Activated T-helper 1 cell treated with anti-CD3 and anti-CD28 coated beads, Interleukin-12 subunit alpha, Interleukin-12 subunit beta, Interleukin-2, Interleukin-4 antibody, amounts not matched to agents 30 ng/mL and 10 ng/mL and 1 ng/mL, durations not matched to agents 14 hours and 24 hours and 36 hours (primary cell): ENCODE measurements at regions of chr9 and their contacts with region 1.

Region 1: GRCh38 chr9:97632985-97633858 is at the starts of genes NCBP1 and TSTD2:
- DNase-seq: peak; percentile 95
- H3K4me3 Mint-ChIP-seq: peak within 1 kb of the TSS; percentile 94
- H3K27ac Mint-ChIP-seq: peak within 1 kb of the TSS; percentile 99
- H3K4me1 Mint-ChIP-seq: peaks cover 48% of the 10 kb centered on the region
- H3K27me3 Mint-ChIP-seq: no peaks in the 10 kb centered on the region
- total RNA-seq, gene NCBP1: 43.2 and 50.5 TPM in 2 replicates
- total RNA-seq, gene TSTD2: 16.4 and 19.2 TPM in 2 replicates

Region 2: DNA sequence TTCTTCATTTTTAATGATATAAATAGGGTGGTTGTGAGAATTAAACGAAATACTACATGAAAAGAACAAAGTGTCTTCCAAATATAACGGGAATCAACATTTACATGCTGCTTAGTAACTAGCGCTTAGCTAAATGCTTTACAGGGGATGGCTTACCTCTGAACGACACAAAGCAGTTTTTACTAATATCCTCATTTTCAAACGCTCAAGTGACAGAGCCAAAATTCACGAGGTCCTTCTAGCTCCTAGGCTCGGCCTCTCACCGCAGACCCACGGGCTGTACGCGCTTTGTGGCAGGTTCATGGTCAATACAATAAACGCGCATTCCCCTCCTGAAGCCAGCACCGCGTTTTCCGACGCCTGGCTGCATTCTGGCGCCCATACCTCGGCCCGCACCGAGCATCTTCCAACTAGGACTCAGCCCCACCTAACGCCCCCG is 855.8 kb before region 1 on chr9:
- intact Hi-C with region 1: loop called (anchors 10 kb)
- DNase-seq: no peak
- H3K4me3 Mint-ChIP-seq: peak overlapping the region; percentile 100
- H3K27ac Mint-ChIP-seq: peak overlapping the region; percentile 93
- H3K4me1 Mint-ChIP-seq: peaks cover 19% of the 10 kb centered on the region
- H3K27me3 Mint-ChIP-seq: peaks cover 2% of the 10 kb centered on the region

Region 3: GRCh38 chr9:97615439-97616072 is 17.7 kb before region 1 on chr9:
- intact Hi-C with region 1: loop called (anchors 1 kb)
- DNase-seq: peak; percentile 40
- H3K4me3 Mint-ChIP-seq: no peak overlapping the region
- H3K27ac Mint-ChIP-seq: no peak overlapping the region
- H3K4me1 Mint-ChIP-seq: peaks cover 16% of the 10 kb centered on the region
- H3K27me3 Mint-ChIP-seq: no peaks in the 10 kb centered on the region

Region 4: GRCh38 chr9:97906236-97906831 is 273.1 kb after region 1 on chr9:
- intact Hi-C with region 1: loop called (anchors 5 kb)
- DNase-seq: no peak
- H3K4me3 Mint-ChIP-seq: peak overlapping the region; percentile 72
- H3K27ac Mint-ChIP-seq: peak overlapping the region; percentile 98
- H3K4me1 Mint-ChIP-seq: peaks cover 81% of the 10 kb centered on the region
- H3K27me3 Mint-ChIP-seq: no peaks in the 10 kb centered on the region

Region 5: GRCh38 chr9:98045234-98046179 is 412.3 kb after region 1 on chr9:
- intact Hi-C with region 1: loop called (anchors 1 kb)
- DNase-seq: peak; percentile 38
- H3K4me3 Mint-ChIP-seq: peak overlapping the region; percentile 87
- H3K27ac Mint-ChIP-seq: peak overlapping the region; percentile 86
- H3K4me1 Mint-ChIP-seq: peaks cover 41% of the 10 kb centered on the region
- H3K27me3 Mint-ChIP-seq: peaks cover 6% of the 10 kb centered on the region

Region 6: GRCh38 chr9:98255578-98256296 is 622.5 kb after region 1 on chr9 and contains the start of gene TBC1D2:
- intact Hi-C with region 1: loop called (anchors 1 kb)
- DNase-seq: peak; percentile 96
- H3K4me3 Mint-ChIP-seq: peak within 1 kb of the TSS; percentile 89
- H3K27ac Mint-ChIP-seq: peak within 1 kb of the TSS; percentile 94
- H3K4me1 Mint-ChIP-seq: peaks cover 27% of the 10 kb centered on the region
- H3K27me3 Mint-ChIP-seq: peaks cover 3% of the 10 kb centered on the region
- total RNA-seq, gene TBC1D2: 1.8 and 2.2 TPM in 2 replicates